CD4-positive, alpha-beta T cell (primary cell): ENCODE measurements at regions of chr16 and their contacts with region 1.

Region 1: DNA sequence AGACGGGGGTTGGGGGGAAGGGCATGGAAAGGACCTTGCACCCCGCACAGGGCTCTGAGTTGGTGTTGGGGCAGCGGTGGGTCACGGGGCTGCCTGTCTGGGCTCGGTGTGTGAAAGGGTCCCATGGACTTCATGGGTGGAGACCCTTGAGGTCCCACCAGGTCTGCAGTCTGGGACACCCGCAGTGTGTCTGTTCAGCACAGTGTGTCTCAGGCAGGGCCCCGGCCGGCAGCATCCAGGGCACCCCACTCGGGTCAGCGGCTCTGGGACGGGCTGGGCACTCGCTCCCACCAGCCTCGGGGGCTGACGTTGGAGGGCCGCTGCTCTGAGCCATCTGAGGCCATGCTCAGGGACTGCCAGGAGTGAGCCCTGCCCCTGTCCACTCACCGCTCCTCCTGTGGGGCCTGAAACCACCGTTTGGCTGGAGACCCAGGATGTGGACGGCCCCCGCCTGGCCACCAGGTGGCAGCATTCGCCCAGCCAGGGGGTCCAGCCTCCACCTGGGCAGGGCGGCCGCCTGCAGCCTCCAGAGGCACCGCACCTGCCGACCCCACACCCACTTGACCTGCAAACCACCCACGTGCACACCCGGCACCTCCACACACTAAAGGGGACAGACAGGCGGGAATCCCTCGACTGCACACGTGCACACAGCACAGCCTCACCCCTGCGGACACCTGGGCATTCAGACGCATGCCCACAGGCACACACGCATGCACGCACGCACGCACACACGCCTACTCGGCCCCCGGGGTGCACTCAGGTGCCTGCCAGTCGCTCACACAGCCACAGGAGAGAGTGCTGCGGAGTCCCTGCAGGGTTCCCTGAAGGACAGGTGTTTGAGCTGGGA is 10.1 kb upstream of the ZFPM1 start:
- DNase-seq: peak; percentile 60 to 90 (median 78)
- ATAC-seq: peak; percentile 88
- H3K4me3 ChIP-seq: no peak overlapping the region
- H3K4me3 Mint-ChIP-seq: no peak overlapping the region
- H3K27ac ChIP-seq: no peak overlapping the region
- H3K27ac Mint-ChIP-seq: no peak overlapping the region
- H3K4me1 ChIP-seq: peaks cover 8% of the 10 kb centered on the region
- H3K4me1 Mint-ChIP-seq: no peaks in the 10 kb centered on the region
- H3K27me3 ChIP-seq: no peaks in the 10 kb centered on the region
- H3K27me3 Mint-ChIP-seq: no peaks in the 10 kb centered on the region
- CTCF ChIP-seq: peak; percentile 94

Region 2: DNA sequence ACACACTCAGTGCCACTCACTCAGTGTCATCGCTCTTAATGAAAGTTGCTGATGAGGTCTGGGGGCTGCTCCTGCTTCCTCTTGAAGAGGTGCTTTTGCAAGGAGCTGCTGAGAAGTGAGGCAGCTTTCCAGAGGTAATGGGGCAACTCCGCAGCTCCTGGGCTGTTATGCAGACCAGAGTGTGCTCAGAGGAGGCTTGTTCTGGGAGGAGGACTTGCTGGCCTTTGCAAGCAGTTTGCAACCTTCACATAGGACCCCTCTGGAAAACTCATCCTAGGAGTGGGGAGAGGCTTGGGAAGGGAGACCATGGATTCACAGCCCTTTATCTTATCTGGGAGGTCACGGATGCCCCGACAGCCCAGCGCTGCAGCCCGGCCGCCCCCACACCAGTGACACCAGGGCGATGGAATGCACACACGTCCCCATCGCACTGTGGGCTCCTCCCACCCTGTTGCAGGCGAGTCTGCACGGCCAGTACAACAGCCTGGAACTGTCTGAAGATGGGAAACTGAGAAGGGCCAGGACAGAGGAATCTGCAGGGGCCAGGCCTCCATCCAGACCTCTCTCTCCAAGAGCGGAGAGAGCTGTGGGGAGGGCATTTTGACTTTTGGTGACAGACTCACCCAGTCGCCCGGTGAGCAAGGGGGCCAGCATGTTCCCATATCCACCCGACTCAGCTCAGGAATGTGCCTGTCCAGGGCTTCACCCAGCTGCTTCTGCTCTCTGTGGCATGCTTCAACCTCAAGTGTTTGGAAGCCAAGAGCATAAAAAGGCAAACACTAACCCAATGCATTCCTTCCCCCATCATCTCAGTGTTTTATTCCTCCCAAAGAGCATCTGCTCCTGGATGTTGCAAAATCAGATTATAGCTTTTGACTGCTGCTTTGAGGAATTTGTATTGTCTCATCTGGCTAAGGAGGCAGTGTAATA is 138.8 kb before region 1 on chr16:
- CTCF ChIA-PET with region 1: no interaction called
- POLR2A ChIA-PET with region 1: no interaction called
- intact Hi-C with region 1: no loop called
- DNase-seq: no peak
- ATAC-seq: no peak
- H3K4me3 ChIP-seq: no peak overlapping the region
- H3K4me3 Mint-ChIP-seq: no peak overlapping the region
- H3K27ac ChIP-seq: no peak overlapping the region
- H3K27ac Mint-ChIP-seq: no peak overlapping the region
- H3K4me1 ChIP-seq: no peaks in the 10 kb centered on the region
- H3K4me1 Mint-ChIP-seq: no peaks in the 10 kb centered on the region
- H3K27me3 ChIP-seq: peaks cover 3 to 4% of the 10 kb centered on the region in 2 experiments
- H3K27me3 Mint-ChIP-seq: peaks cover 21% of the 10 kb centered on the region
- CTCF ChIP-seq: no peak

Region 3: DNA sequence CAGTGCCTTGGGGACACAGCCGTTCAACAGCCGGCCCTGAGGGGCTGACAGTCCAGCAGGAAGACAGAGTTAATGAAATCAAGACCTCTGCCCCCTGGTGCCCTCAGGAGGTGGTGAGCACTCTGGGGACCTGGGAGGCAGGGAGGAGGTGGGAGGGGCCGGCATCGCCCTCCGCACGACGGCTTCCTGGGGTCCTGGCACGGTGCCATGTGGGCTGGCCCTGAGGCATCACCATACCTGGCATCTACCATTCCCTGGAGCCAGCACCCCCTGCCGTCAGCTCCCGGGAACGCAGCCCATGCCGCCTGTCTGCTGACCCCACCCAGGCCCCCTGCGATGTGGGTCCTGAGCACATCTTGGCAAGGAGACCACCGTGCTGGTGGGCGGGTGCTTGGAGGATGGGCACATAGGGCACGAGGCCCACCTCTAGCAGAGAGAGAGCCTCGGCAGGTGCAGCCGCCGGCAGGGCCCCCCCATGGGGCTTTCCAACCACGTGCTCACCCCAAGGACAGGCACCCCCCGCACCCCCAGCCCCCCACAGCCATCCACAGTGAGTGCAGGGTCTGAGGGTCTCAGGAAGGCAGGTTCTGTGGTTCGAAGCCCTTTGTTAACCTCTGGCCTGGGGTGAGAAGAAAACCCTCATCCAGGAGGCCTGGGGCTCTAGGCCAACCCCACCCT is 62.6 kb after region 1 on chr16:
- CTCF ChIA-PET with region 1: no interaction called
- POLR2A ChIA-PET with region 1: no interaction called
- intact Hi-C with region 1: loop called (anchors 1 kb)
- DNase-seq: peak; percentile 32 to 86 (median 66)
- ATAC-seq: peak; percentile 88
- H3K4me3 ChIP-seq: no peak overlapping the region
- H3K4me3 Mint-ChIP-seq: no peak overlapping the region
- H3K27ac ChIP-seq: no peak overlapping the region
- H3K27ac Mint-ChIP-seq: peak overlapping the region; percentile 36
- H3K4me1 ChIP-seq: peaks cover 12% of the 10 kb centered on the region
- H3K4me1 Mint-ChIP-seq: peaks cover 5% of the 10 kb centered on the region
- H3K27me3 ChIP-seq: no peaks in the 10 kb centered on the region
- H3K27me3 Mint-ChIP-seq: no peaks in the 10 kb centered on the region
- CTCF ChIP-seq: peak; percentile 35

Region 4: GRCh38 chr16:88527186-88527936 is 84.4 kb after region 1 on chr16:
- CTCF ChIA-PET with region 1: no interaction called
- POLR2A ChIA-PET with region 1: no interaction called
- intact Hi-C with region 1: loop called (anchors 1 kb)
- DNase-seq: peak in 13 of 14 experiments; percentile 48 to 79 (median 57)
- ATAC-seq: peak; percentile 62
- H3K4me3 ChIP-seq: no peak overlapping the region
- H3K4me3 Mint-ChIP-seq: no peak overlapping the region
- H3K27ac ChIP-seq: no peak overlapping the region
- H3K27ac Mint-ChIP-seq: no peak overlapping the region
- H3K4me1 ChIP-seq: peaks cover 10% of the 10 kb centered on the region
- H3K4me1 Mint-ChIP-seq: peaks cover 6% of the 10 kb centered on the region
- H3K27me3 ChIP-seq: no peaks in the 10 kb centered on the region
- H3K27me3 Mint-ChIP-seq: no peaks in the 10 kb centered on the region
- CTCF ChIP-seq: peak; percentile 81

Region 5: DNA sequence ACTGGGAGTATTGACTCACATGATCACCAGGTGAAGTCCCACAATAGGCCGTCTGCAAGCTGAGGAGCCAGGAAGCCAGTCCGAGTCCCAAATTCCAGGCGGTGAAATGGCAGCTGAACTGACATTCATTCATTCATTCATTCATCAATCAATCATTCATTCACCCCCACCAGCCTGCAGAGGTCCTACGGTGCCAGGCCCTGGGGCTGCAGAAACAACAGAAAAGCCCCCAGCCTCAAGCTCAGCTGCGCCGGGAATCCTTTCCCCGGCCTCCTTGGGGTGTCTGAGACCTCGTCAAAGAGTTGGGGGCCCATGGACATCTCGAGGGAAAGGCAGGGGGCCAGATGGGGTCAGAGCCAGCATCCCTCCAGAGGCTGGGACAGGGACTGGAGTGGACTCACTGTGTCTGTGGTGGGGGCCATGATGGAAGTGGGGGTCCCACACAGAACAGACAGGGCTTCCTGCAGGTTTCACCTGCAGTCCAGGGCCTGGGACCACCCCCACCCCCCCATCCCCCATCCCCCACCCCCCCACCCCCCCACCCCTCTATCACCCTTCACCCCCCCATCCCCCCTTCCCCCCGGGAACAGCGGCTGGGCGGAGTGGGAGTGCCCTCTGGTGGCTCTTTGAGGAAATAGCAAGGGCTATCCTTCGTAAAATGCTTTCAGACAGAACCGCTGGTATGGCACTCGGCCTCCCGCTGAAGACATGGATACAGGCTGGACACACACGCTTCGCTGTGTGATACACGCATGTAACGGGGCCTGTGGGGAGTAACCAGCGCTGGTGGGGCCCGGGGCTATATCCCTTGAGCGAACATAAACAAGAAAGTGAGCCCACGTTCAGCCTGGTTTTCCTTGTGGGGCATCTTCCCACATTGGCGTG is 118.8 kb after region 1 on chr16:
- CTCF ChIA-PET with region 1: interaction called, 4 read pairs
- POLR2A ChIA-PET with region 1: no interaction called
- intact Hi-C with region 1: loop called (anchors 1 kb)
- DNase-seq: peak; percentile 36 to 80 (median 48)
- ATAC-seq: peak; percentile 86
- H3K4me3 ChIP-seq: no peak overlapping the region
- H3K4me3 Mint-ChIP-seq: peak overlapping the region; percentile 48
- H3K27ac ChIP-seq: no peak overlapping the region
- H3K27ac Mint-ChIP-seq: no peak overlapping the region
- H3K4me1 ChIP-seq: peaks cover 5% of the 10 kb centered on the region
- H3K4me1 Mint-ChIP-seq: peaks cover 3% of the 10 kb centered on the region
- H3K27me3 ChIP-seq: peaks cover 0 to 3% of the 10 kb centered on the region in 2 experiments
- H3K27me3 Mint-ChIP-seq: peaks cover 5% of the 10 kb centered on the region
- CTCF ChIP-seq: peak; percentile 56

Region 6: GRCh38 chr16:88672776-88673175 is 229.8 kb after region 1 on chr16:
- CTCF ChIA-PET with region 1: no interaction called
- POLR2A ChIA-PET with region 1: no interaction called
- intact Hi-C with region 1: no loop called
- DNase-seq: no peak
- ATAC-seq: no peak
- H3K4me3 ChIP-seq: no peak overlapping the region
- H3K4me3 Mint-ChIP-seq: no peak overlapping the region
- H3K27ac ChIP-seq: no peak overlapping the region
- H3K27ac Mint-ChIP-seq: no peak overlapping the region
- H3K4me1 ChIP-seq: no peaks in the 10 kb centered on the region
- H3K4me1 Mint-ChIP-seq: no peaks in the 10 kb centered on the region
- H3K27me3 ChIP-seq: no peaks in the 10 kb centered on the region
- H3K27me3 Mint-ChIP-seq: no peaks in the 10 kb centered on the region
- CTCF ChIP-seq: no peak